Ascending aorta (tissue), 2 donors: ENCODE measurements at regions of chr7 and their contacts with region 1.

Region 1: DNA sequence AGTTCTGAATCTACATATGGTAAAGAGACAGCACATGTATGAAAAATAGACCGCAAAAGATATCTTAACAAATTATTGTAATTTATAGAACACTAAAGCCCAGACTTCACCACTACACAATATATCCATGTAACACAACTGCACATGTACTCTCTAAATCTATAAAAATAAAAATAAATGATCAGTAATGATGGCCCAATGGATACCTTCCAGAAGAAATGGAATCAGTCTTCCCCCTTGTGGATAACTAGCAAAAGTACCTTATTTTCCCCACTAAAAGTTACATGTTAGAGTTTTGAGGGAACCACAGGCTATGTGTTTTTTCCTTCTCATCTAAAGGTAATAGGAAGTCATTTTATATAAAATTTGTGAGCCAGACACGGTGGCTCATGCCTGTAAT is 25.7 kb downstream of the C7orf25 start:
- DNase-seq: no peak
- H3K4me3 ChIP-seq: no peak overlapping the region
- H3K27ac ChIP-seq: no peak overlapping the region
- H3K4me1 ChIP-seq: peaks cover 0 to 12% of the 10 kb centered on the region in 2 donors
- H3K27me3 ChIP-seq: no peaks in the 10 kb centered on the region
- CTCF ChIP-seq: peak in 2 of 3 experiments; percentile 11

Region 2: GRCh38 chr7:42911454-42912447 is 25.6 kb after region 1 on chr7 and contains the start of gene C7orf25:
- intact Hi-C with region 1: loop called (anchors 1 kb)
- DNase-seq: peak; percentile 85 to 97
- H3K4me3 ChIP-seq: peak within 1 kb of the TSS; percentile 82 to 87
- H3K27ac ChIP-seq: peak within 1 kb of the TSS; percentile 70 to 72
- H3K4me1 ChIP-seq: peaks cover 7% of the 10 kb centered on the region in 2 donors
- H3K27me3 ChIP-seq: no peaks in the 10 kb centered on the region
- CTCF ChIP-seq: no peak
- total RNA-seq, gene C7orf25: 0.75 TPM